ENCODE measurements at regions of chr16 and their contacts with region 1.

Region 1: GRCh38 chr16:70289229-70290098 is at the start of gene AARS1:
- DNase-seq: peak; percentile 87 to 99 (median 92)
- ATAC-seq: peak; percentile 93
- H3K4me3 ChIP-seq: peak within 1 kb of the TSS; percentile 75 to 81
- H3K4me3 Mint-ChIP-seq: peak within 1 kb of the TSS; percentile 100
- H3K27ac ChIP-seq: peak within 1 kb of the TSS; percentile 89 to 94
- H3K27ac Mint-ChIP-seq: peak within 1 kb of the TSS; percentile 99
- H3K4me1 ChIP-seq: peaks cover 10% of the 10 kb centered on the region
- H3K4me1 Mint-ChIP-seq: peaks cover 18% of the 10 kb centered on the region
- H3K27me3 ChIP-seq: no peaks in the 10 kb centered on the region
- H3K27me3 Mint-ChIP-seq: no peaks in the 10 kb centered on the region
- CTCF ChIP-seq: no peak
- total RNA-seq, gene AARS1: 10.1 to 10.6 TPM

Region 2: DNA sequence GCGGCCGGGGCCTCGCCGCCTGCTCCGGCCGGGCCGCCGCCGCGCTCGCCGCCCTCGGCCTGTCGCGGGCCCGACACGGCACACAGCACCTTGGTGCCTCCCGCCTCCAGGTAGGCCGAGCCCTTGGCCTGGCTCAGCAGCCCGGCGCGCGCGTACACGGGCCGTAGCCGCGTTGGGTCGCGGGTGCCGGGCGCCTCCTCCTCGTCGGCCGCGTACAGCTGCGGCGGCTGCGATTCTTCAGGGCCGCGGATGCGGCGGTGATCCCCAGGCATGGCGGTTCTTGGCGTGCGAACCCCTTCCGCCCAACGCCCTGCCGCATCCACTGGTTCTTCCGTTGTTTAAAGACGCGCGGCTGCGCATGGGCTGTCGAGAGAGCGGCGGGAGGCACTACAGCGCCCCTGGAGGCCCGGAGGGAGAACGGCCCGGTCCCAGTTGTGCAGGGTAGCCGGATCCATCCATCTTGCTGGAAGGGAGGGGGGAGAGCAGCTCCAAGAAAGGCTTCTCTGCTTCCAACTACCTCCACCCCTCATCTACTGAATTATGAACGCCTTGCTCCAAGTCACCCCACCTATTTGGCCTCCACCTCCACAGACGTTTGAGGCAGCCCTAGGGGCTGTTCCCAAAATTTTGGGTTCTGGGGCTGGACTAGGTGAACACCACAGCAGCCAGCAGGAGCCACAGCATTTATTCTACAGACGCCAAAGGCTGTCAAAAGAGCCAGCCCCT is 37.7 kb before region 1 on chr16 and contains the start of gene EXOSC6:
- CTCF ChIA-PET with region 1: interaction called, 4 read pairs
- POLR2A ChIA-PET with region 1: interaction called, 8 read pairs
- intact Hi-C with region 1: loop called (anchors 1 to 2 kb)
- DNase-seq: peak; percentile 80 to 97 (median 92)
- ATAC-seq: peak; percentile 97
- H3K4me3 ChIP-seq: peak within 1 kb of the TSS; percentile 41 to 62
- H3K4me3 Mint-ChIP-seq: peak within 1 kb of the TSS; percentile 92
- H3K27ac ChIP-seq: peak within 1 kb of the TSS; percentile 60 to 85
- H3K27ac Mint-ChIP-seq: peak within 1 kb of the TSS; percentile 97
- H3K4me1 ChIP-seq: peaks cover 18% of the 10 kb centered on the region
- H3K4me1 Mint-ChIP-seq: peaks cover 26% of the 10 kb centered on the region
- H3K27me3 ChIP-seq: no peaks in the 10 kb centered on the region
- H3K27me3 Mint-ChIP-seq: no peaks in the 10 kb centered on the region
- CTCF ChIP-seq: peak; percentile 80
- total RNA-seq, gene EXOSC6: 40.6 to 43.6 TPM

Region 3: DNA sequence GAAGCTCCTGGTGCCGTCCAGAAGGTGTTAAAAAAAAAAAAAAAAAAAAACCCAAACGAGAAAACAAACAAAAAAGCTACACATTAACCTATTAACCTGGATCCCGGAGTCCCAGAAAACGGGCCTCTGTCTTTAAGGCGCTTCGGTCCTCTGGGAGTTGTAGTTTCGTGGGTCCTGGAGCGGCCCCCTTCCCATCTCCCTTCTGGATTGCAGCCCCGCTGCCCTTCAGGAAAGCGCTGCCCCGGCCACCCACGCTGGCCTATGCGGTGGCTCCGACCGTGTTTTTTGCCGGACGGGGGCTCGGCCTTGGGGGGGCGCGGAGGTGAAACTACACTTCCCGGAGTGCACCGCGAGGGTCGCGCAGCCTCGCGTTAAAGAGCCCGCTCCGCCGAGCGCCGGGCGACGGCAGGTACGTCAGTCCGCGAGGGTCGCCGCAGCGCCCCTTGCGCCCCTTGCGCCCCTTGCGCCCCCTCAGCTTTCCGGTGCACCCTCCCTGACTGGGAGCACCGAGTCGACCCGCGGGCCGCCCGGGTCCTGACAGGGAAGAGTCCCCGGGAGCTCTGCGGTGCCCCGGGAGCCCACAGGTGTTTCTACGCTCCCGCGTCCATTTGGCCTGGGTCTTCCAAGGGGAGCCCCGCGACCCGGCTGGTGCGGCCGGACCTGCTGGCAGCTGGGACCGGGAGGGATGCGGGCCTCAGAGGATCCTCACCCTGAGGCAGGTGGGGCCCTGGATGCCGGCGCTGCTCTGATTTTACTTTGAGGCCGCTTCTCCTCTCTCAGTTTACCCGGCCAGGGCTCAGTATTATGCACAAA is 165.0 kb after region 1 on chr16 and contains the start of gene FCSK:
- CTCF ChIA-PET with region 1: no interaction called
- POLR2A ChIA-PET with region 1: no interaction called
- intact Hi-C with region 1: loop called in 1 of 2 experiments (anchors 1 kb)
- DNase-seq: peak; percentile 50 to 85 (median 70)
- ATAC-seq: peak; percentile 90
- H3K4me3 ChIP-seq: peak within 1 kb of the TSS; percentile 98 to 100
- H3K4me3 Mint-ChIP-seq: peak within 1 kb of the TSS; percentile 90
- H3K27ac ChIP-seq: peak within 1 kb of the TSS; percentile 76 to 97
- H3K27ac Mint-ChIP-seq: peak within 1 kb of the TSS; percentile 88
- H3K4me1 ChIP-seq: peaks cover 20% of the 10 kb centered on the region
- H3K4me1 Mint-ChIP-seq: peaks cover 27% of the 10 kb centered on the region
- H3K27me3 ChIP-seq: no peaks in the 10 kb centered on the region
- H3K27me3 Mint-ChIP-seq: no peaks in the 10 kb centered on the region
- CTCF ChIP-seq: no peak
- total RNA-seq, gene FCSK: 17.8 to 18.2 TPM

Region 4: GRCh38 chr16:70653809-70654771 is 364.6 kb after region 1 on chr16:
- CTCF ChIA-PET with region 1: no interaction called
- POLR2A ChIA-PET with region 1: no interaction called
- intact Hi-C with region 1: no loop called
- DNase-seq: peak; percentile 65 to 89 (median 79)
- ATAC-seq: peak; percentile 90
- H3K4me3 ChIP-seq: no peak overlapping the region
- H3K4me3 Mint-ChIP-seq: peak overlapping the region; percentile 13
- H3K27ac ChIP-seq: no peak overlapping the region
- H3K27ac Mint-ChIP-seq: no peak overlapping the region
- H3K4me1 ChIP-seq: no peaks in the 10 kb centered on the region
- H3K4me1 Mint-ChIP-seq: peaks cover 4% of the 10 kb centered on the region
- H3K27me3 ChIP-seq: no peaks in the 10 kb centered on the region
- H3K27me3 Mint-ChIP-seq: peaks cover 2% of the 10 kb centered on the region
- CTCF ChIP-seq: peak; percentile 80